A673 (cell line): ENCODE measurements at regions of chr1 and their contacts with region 1.

Region 1: DNA sequence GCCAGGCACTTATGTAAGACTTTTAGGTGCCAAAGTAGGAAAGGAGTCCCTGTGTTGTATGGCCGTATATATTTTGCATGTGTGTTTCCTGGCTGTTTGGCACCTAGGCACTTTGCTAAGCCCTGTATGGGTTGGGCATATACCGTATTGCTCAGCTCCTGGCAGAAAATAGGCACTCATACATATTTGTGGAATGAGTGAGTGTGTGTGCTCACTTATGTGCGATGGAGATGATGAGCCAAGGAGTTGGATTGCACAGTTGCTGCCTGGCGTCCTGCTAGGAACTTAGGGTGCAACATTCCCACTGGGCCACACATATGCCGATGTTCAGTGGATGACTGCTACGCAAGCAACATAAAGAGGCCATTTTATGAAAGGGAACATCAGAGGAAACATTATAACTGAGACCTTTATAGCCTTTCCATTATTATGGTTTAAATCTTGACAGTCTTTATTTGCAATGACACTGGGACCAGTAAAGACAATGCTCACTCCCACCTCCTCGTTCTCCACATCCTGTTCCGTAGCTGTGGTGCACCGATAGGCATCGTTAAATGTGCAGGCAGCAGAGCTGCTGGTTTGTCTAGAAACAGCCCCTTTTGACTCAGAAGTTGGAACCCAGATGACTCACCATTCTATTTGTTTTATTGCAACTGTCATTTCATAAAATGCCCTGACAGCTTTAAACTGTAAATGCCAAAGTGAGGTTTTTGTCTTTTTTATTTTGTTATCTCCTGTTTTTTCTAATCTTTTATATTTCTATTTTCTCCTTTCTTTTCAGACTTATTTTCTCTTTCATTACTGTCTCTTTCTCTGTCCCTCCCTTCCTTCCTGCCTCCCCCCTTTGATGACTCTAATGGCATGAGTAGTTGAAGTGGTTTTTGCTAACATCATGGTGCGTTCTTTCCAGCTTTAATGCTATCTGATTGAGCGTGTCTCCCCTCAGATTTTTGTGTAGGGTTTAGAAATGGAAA is 36.1 kb downstream of the PEX14 start:
- DNase-seq: peak; percentile 79
- H3K4me3 ChIP-seq: peak overlapping the region; percentile 11
- H3K27ac ChIP-seq: peak overlapping the region; percentile 51
- H3K4me1 ChIP-seq: peaks cover 75% of the 10 kb centered on the region
- H3K27me3 ChIP-seq: no peaks in the 10 kb centered on the region
- CTCF ChIP-seq: no peak

Region 2: DNA sequence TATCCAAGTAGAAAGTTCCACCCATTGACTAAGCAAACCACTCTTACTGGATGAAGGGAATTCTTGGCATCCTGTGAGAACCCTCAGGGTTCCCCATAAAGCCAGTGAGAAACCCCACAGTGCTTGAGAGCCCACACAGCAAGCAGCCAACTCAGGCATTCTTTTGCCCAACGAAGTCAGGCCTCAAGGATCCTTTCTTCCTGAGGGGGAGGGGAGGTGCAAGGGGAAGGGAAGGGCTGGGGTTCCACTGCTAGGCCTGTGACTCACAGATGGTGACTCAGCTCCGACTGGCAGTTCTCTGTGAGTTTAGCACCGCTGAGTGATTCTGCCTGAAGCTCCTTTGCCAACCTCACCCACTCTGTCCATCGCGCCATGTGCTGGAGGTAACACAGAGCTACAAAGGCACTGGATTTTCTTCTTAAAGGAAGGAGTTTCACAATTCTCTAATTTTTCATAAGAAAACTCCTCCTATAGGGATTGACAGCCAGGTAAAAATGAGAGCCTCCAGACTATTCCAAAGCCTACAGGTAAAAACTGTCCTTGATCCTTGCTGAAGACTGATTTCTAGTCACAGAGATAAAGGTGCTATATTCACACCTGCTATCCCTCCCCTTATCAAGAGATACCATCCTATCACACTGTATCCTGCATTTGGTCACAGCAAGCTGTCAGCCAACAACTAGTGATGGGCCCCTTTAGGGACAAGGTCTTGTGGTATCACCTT is 1637.1 kb before region 1 on chr1:
- CTCF ChIA-PET with region 1: no interaction called
- POLR2A ChIA-PET with region 1: interaction called, 13 read pairs
- intact Hi-C with region 1: no loop called
- DNase-seq: peak; percentile 99
- H3K4me3 ChIP-seq: peak overlapping the region; percentile 25
- H3K27ac ChIP-seq: peak overlapping the region; percentile 75
- H3K4me1 ChIP-seq: peaks cover 41% of the 10 kb centered on the region
- H3K27me3 ChIP-seq: no peaks in the 10 kb centered on the region
- CTCF ChIP-seq: no peak

Region 3: DNA sequence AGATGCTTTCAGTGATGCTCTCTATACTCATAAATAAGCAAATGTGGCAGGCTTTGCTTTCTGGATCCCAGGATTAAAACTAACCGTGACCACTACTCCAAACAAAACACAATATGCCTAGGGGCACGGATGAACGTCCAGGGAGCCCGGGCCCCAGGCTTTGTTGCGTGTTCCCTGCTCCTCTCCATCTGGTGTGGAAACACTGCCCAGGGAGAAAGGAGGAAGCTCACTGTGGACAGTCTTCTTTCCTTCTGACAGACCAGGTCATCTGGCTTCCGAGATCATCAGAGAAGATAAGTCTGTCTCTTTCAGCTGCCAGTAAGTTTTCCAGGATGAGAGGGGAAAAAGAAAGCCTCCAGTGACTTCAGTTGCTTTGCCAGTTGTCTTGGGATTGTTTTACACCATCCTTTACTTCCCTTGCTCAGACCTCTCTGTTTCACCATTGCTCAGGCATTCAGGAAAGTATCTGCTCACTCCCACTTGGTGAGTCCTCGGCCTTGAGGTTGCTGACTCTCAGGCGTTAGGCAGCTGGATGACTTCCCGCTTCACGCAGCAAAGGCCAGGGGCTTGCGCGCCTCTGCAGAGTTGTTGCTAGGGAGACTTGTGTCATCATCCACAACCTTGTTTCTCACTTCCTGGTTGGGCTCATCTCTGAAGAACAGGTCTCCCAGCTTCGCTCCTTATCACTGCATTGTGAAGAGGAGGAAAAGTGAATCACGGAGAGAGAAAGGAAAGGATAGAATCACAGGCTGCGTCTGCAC is 132.5 kb before region 1 on chr1:
- CTCF ChIA-PET with region 1: no interaction called
- POLR2A ChIA-PET with region 1: no interaction called
- intact Hi-C with region 1: no loop called
- DNase-seq: no peak
- H3K4me3 ChIP-seq: no peak overlapping the region
- H3K27ac ChIP-seq: no peak overlapping the region
- H3K4me1 ChIP-seq: no peaks in the 10 kb centered on the region
- H3K27me3 ChIP-seq: no peaks in the 10 kb centered on the region
- CTCF ChIP-seq: no peak

Region 4: GRCh38 chr1:10796019-10796944 is 285.5 kb after region 1 on chr1 and contains the start of gene CASZ1:
- CTCF ChIA-PET with region 1: no interaction called
- POLR2A ChIA-PET with region 1: no interaction called
- intact Hi-C with region 1: loop called (anchors 5 kb)
- DNase-seq: peak; percentile 95
- H3K4me3 ChIP-seq: peak within 1 kb of the TSS; percentile 68
- H3K27ac ChIP-seq: no peak within 1 kb of the TSS
- H3K4me1 ChIP-seq: peaks cover 28% of the 10 kb centered on the region
- H3K27me3 ChIP-seq: peaks cover 41% of the 10 kb centered on the region
- CTCF ChIP-seq: no peak
- total RNA-seq, gene CASZ1: 1.6 and 1.9 TPM in 2 replicates

Region 5: DNA sequence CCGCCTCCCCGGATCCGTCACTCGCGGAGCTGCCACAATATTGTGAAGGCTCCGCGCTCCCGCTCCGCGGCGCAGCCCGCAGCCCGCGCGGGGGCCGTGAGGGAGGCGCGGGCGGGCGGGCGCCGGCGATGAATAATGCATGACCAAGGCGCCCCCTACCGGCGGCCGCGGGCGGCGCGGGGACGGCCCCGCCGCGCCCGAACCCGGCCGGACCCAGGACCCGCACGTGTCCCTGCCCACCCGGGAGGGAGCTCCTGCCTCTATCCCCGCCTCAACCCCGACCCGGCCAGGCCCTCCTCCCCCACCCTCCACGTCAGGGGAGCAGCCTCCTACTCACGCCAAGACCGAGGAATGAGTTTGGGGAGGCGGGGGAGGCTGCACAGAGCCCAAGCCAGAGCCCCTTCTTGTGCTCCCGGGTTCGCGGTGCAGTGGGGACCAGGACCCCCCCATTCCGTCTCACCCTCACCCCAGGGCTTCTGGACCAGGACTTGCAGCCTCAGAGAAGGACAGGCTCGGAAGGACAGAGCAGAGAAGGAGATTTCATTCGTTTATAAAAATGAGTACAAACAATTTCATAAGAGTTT is 356.4 kb after region 1 on chr1:
- CTCF ChIA-PET with region 1: interaction called, 4 read pairs
- POLR2A ChIA-PET with region 1: no interaction called
- intact Hi-C with region 1: loop called (anchors 2 kb)
- DNase-seq: peak; percentile 69
- H3K4me3 ChIP-seq: peak overlapping the region; percentile 46
- H3K27ac ChIP-seq: peak overlapping the region; percentile 19
- H3K4me1 ChIP-seq: peaks cover 10% of the 10 kb centered on the region
- H3K27me3 ChIP-seq: no peaks in the 10 kb centered on the region
- CTCF ChIP-seq: peak; percentile 61; the same call in 1 of the 2 replicates

Region 6: DNA sequence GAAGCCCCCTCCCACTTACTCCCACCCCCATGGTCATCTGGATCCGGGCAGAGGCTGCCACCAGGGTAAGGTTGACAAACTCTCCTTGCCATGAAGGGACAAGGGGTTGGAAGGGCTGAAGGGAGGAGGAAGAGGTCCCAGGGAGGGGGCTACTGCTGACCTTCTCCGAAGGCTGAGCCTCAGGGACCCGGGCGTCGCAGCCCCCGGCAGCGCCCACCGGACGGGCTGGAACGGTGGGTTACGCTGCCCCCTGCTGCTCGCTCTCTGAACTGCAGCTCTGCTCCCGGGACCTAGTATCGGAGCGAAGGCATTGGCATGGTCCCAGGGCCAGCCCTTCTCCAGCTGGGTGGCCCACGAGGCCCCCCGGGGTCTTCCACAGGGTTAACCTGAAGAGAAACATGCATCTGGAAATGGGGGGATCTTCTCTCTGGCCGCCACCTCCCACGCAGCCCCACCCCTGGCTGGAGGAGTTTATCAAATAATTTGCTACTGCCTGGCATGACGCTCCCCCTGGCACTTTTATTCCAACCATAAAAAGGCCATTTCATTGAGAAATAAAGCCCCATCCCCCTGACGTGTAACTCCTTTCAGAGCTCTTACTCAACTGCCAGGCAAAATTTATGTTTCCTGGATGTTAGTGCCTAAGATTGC is 431.2 kb after region 1 on chr1:
- CTCF ChIA-PET with region 1: interaction called, 4 read pairs
- POLR2A ChIA-PET with region 1: no interaction called
- intact Hi-C with region 1: loop called (anchors 2 kb)
- DNase-seq: peak; percentile 85
- H3K4me3 ChIP-seq: peak overlapping the region; percentile 34
- H3K27ac ChIP-seq: peak overlapping the region; percentile 71
- H3K4me1 ChIP-seq: peaks cover 54% of the 10 kb centered on the region
- H3K27me3 ChIP-seq: no peaks in the 10 kb centered on the region
- CTCF ChIP-seq: peak; percentile 98

Region 7: DNA sequence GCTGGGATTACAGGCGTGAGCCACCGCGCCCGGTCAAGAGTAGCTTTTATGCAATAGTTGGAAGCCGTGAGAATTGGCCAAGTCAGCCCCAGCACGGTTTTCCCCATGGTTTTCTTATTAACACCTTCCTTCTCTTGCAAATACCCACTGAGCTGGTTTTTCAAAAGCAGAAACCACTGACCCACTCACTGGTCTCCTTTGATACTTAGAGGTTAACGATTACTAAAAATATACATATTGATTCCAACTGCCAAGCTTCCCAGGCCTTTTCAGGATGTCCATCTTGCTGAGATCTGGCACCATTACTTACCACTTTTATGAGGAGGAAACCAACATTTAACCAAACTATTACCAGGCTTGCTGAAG is 475.7 kb after region 1 on chr1:
- CTCF ChIA-PET with region 1: no interaction called
- POLR2A ChIA-PET with region 1: no interaction called
- intact Hi-C with region 1: no loop called
- DNase-seq: no peak
- H3K4me3 ChIP-seq: no peak overlapping the region
- H3K27ac ChIP-seq: peak overlapping the region; percentile 60
- H3K4me1 ChIP-seq: peaks cover 5% of the 10 kb centered on the region
- H3K27me3 ChIP-seq: no peaks in the 10 kb centered on the region
- CTCF ChIP-seq: no peak